Breast epithelium (tissue), 4 donors: ENCODE measurements at regions of chr2 and their contacts with region 1.

Region 1: GRCh38 chr2:23092831-23093230 is 292.1 kb upstream of the KLHL29 start:
- DNase-seq: no peak
- H3K4me3 ChIP-seq: no peak overlapping the region
- H3K27ac ChIP-seq: no peak overlapping the region
- H3K4me1 ChIP-seq: no peaks in the 10 kb centered on the region
- H3K27me3 ChIP-seq: no peaks in the 10 kb centered on the region
- CTCF ChIP-seq: no peak
- POLR2A ChIP-seq: no peak

Region 2: DNA sequence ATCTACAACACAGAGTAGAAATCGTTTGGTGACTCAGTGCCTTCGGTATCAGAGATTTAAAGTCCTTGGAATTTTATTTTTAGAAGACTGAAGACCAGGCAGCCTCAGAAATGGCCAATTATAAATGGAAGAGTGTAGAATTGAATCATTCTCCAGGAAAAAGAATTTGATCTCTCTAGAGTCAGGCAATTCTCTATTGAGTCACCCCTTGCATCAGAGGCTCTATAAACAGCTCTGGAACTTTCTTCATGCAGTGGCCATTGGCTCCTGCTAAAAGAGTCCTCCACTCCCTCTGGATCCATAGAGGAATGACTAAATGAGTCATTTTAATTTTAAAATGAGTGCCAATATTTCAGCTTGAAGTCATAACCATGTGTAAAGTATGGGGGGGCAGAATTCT is 1152.9 kb before region 1 on chr2:
- intact Hi-C with region 1: loop called (anchors 5 kb)
- DNase-seq: no peak
- H3K4me3 ChIP-seq: no peak overlapping the region
- H3K27ac ChIP-seq: no peak overlapping the region
- H3K4me1 ChIP-seq: no peaks in the 10 kb centered on the region
- H3K27me3 ChIP-seq: no peaks in the 10 kb centered on the region
- CTCF ChIP-seq: no peak
- POLR2A ChIP-seq: no peak

Region 3: GRCh38 chr2:22153931-22154613 is 938.8 kb before region 1 on chr2:
- intact Hi-C with region 1: no loop called
- DNase-seq: no peak
- H3K4me3 ChIP-seq: no peak overlapping the region
- H3K27ac ChIP-seq: no peak overlapping the region
- H3K4me1 ChIP-seq: no peaks in the 10 kb centered on the region
- H3K27me3 ChIP-seq: no peaks in the 10 kb centered on the region
- CTCF ChIP-seq: no peak
- POLR2A ChIP-seq: no peak

Region 4: GRCh38 chr2:22981785-22982184 is 111.0 kb before region 1 on chr2:
- intact Hi-C with region 1: no loop called
- DNase-seq: no peak
- H3K4me3 ChIP-seq: no peak overlapping the region
- H3K27ac ChIP-seq: no peak overlapping the region
- H3K4me1 ChIP-seq: no peaks in the 10 kb centered on the region
- H3K27me3 ChIP-seq: no peaks in the 10 kb centered on the region
- CTCF ChIP-seq: no peak
- POLR2A ChIP-seq: no peak

Region 5: DNA sequence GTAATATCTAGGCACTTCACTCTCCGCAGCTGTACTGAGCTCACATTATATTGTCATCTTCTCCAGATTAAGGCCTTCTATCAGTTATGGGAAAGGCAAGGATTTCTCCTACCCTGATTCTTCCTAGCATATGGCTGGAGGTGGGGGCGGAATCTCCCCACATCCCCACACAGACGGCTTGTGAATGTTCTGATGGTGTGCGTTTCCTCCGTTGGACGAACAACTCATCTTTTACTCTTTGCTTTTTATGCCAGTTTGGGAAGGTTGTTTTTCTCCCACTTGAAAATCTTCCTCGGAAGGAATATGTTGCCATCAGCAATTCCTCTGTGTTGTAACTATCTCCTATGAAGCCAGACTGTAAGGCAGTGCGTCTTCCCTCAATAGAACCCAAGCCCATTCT is 316.4 kb after region 1 on chr2:
- intact Hi-C with region 1: loop called (anchors 5 kb)
- DNase-seq: no peak
- H3K4me3 ChIP-seq: no peak overlapping the region
- H3K27ac ChIP-seq: no peak overlapping the region
- H3K4me1 ChIP-seq: no peaks in the 10 kb centered on the region
- H3K27me3 ChIP-seq: no peaks in the 10 kb centered on the region
- CTCF ChIP-seq: no peak
- POLR2A ChIP-seq: no peak

Region 6: DNA sequence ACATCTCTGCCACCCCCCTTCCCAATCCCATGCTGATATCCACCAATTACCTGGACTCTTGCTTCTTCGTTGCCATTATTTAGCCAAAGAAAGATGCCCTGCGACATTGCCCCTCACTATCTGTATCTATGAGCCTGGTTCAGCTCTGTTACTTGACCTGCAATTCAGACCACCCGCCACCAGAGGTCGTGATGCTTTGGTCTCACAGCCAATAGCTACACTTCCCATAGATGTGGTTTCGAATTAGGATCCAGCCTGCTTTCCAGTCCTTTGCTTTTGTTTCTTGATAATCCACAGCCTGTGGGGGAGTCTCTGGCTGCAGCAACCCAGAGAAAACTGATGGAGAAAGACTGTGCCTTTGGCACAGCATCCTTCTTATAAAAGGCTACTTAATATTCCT is 531.5 kb after region 1 on chr2:
- intact Hi-C with region 1: no loop called
- DNase-seq: no peak
- H3K4me3 ChIP-seq: no peak overlapping the region
- H3K27ac ChIP-seq: no peak overlapping the region
- H3K4me1 ChIP-seq: no peaks in the 10 kb centered on the region
- H3K27me3 ChIP-seq: no peaks in the 10 kb centered on the region
- CTCF ChIP-seq: no peak
- POLR2A ChIP-seq: no peak